PC-9 (cell line): ENCODE measurements at regions of chr1 and their contacts with region 1.

Region 1: GRCh38 chr1:56284928-56285327 is 294.4 kb downstream of the PLPP3 start:
- DNase-seq: peak; percentile 36 to 90
- H3K4me3 ChIP-seq: no peak overlapping the region
- H3K27ac ChIP-seq: peak overlapping the region; percentile 89
- H3K4me1 ChIP-seq: peaks cover 48% of the 10 kb centered on the region
- H3K27me3 ChIP-seq: no peaks in the 10 kb centered on the region
- CTCF ChIP-seq: no peak

Region 2: GRCh38 chr1:56265216-56265615 is 19.7 kb before region 1 on chr1:
- CTCF ChIA-PET with region 1: no interaction called
- POLR2A ChIA-PET with region 1: no interaction called
- intact Hi-C with region 1: no loop called
- DNase-seq: no peak
- H3K4me3 ChIP-seq: no peak overlapping the region
- H3K27ac ChIP-seq: no peak overlapping the region
- H3K4me1 ChIP-seq: no peaks in the 10 kb centered on the region
- H3K27me3 ChIP-seq: no peaks in the 10 kb centered on the region
- CTCF ChIP-seq: no peak

Region 3: GRCh38 chr1:56330391-56331026 is 45.6 kb after region 1 on chr1:
- CTCF ChIA-PET with region 1: no interaction called
- POLR2A ChIA-PET with region 1: interaction called, 6 read pairs
- intact Hi-C with region 1: loop called (anchors 5 kb)
- DNase-seq: peak in 1 of 2 experiments; percentile 46
- H3K4me3 ChIP-seq: no peak overlapping the region
- H3K27ac ChIP-seq: peak overlapping the region; percentile 55
- H3K4me1 ChIP-seq: peaks cover 46% of the 10 kb centered on the region
- H3K27me3 ChIP-seq: no peaks in the 10 kb centered on the region
- CTCF ChIP-seq: no peak